ENCODE measurements at regions of chr6 and their contacts with region 1.

Region 1: GRCh38 chr6:43035495-43036194 is 14.2 kb downstream of the RRP36 start:
- H3K4me3 ChIP-seq: no peak overlapping the region
- H3K27ac ChIP-seq: 0 out of 2 replicates have a peak overlapping the region, but pooled peaks have one; percentile 37
- H3K4me1 ChIP-seq: no peaks in the 10 kb centered on the region
- CTCF ChIP-seq: no peak

Region 2: GRCh38 chr6:43021270-43022047 is 14.2 kb before region 1 on chr6 and contains the start of gene RRP36:
- CTCF ChIA-PET with region 1: interaction called, 4 read pairs
- POLR2A ChIA-PET with region 1: interaction called, 22 read pairs
- H3K4me3 ChIP-seq: peak within 1 kb of the TSS; percentile 91
- H3K27ac ChIP-seq: peak within 1 kb of the TSS; percentile 86
- H3K4me1 ChIP-seq: peaks cover 9% of the 10 kb centered on the region
- CTCF ChIP-seq: no peak

Region 3: GRCh38 chr6:43115365-43115764 is 79.7 kb after region 1 on chr6:
- CTCF ChIA-PET with region 1: no interaction called
- POLR2A ChIA-PET with region 1: no interaction called
- H3K4me3 ChIP-seq: no peak overlapping the region
- H3K27ac ChIP-seq: no peak overlapping the region
- H3K4me1 ChIP-seq: peaks cover 6% of the 10 kb centered on the region
- CTCF ChIP-seq: no peak